Left ventricle myocardium superior (tissue), 1 donor: ENCODE measurements at regions of chr16 and their contacts with region 1.

Region 1: GRCh38 chr16:48609652-48610029 is 339 bp downstream of the N4BP1 start:
- DNase-seq: peak; percentile 89
- ATAC-seq: peak; percentile 77

Region 2: GRCh38 chr16:48385272-48386150 is 224.1 kb before region 1 on chr16 and contains the start of gene SIAH1:
- intact Hi-C with region 1: loop called (anchors 10 kb)
- DNase-seq: peak; percentile 94
- ATAC-seq: peak; percentile 93
- total RNA-seq, gene SIAH1: 14.1 TPM